ENCODE measurements at regions of chr19 and their contacts with region 1.

Region 1: DNA sequence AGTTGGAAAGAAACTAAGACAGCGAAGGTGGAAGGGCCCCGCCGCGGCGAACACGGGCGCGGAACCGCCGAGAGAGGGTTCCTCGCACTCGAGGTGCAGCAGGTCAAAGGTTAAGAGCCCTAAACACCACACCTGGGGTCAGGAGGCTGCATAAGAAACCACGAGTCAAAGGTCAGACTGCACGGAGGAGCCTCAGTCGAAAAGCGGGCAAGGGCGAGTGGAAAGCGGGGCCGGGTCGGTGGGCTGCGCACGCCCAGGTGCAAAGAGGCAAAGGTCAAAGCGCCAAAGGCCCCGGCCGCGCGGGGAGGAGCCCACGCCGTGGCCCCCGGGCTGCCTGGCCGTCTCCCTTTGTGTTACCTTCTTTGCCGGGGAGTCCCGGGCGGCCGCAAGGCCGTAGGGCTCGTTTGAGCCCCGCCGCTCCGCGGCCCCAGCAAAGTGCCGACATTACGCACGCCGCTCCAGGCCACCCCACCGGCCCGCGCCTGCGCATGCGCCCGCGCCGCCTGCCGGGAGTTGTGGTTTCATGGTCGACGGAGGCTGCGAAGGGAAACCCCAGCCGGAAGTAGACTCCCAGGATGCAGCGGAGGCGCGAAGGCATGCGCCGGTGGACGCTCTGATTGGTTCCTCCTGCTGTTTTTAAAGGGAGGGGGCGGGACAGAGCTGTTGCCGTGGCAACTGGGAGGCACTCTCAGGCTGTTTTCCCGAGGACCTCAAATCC is at the start of gene POLRMT:
- DNase-seq: peak; percentile 98
- ATAC-seq: peak; percentile 98
- H3K4me3 Mint-ChIP-seq: peak within 1 kb of the TSS; percentile 97
- H3K27ac Mint-ChIP-seq: peak within 1 kb of the TSS; percentile 91
- H3K4me1 Mint-ChIP-seq: peaks cover 29% of the 10 kb centered on the region
- H3K27me3 Mint-ChIP-seq: no peaks in the 10 kb centered on the region
- total RNA-seq, gene POLRMT: 69.0 to 77.4 TPM

Region 2: DNA sequence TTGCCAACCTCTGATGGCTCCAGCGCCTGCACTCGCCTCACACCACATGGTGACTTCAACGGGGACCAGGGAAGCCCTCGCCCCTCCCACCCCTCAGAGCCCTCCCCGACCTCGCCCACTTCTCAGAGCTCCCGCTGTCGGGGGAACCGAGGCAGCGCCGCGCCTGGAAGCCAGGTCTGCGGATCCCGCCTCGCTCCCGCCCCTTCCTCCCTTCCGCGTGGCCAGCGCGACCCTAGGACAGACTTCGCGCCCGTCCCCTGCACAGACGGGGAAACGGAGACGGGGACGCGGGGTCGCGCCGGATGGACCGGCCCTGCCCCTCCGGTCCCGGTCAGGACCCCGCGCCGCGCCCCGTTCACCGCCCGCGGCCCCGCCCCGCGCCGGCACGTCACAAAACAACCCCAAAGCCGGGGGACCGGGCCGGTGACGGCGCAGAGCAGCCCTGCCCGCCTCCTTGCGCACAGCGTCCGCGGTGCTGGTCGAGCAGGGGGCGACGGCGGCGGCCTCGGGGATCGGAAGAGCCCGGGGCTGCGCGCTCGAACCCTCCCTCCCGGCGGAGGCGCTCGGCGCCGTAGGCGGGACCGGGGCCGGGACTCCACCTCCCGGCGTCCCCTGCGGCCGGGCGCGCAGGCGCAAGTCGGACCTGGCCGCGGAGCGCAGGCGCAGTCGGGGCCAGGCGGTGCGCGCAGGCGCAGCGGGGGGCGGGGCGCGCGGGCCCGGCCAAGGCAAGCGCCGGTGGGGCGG is 102.0 kb before region 1 on chr19:
- CTCF ChIA-PET with region 1: no interaction called
- POLR2A ChIA-PET with region 1: no interaction called
- intact Hi-C with region 1: loop called in 1 of 2 experiments (anchors 1 kb)
- DNase-seq: peak; percentile 93
- ATAC-seq: peak; percentile 78
- H3K4me3 Mint-ChIP-seq: peak overlapping the region; percentile 77
- H3K27ac Mint-ChIP-seq: peak overlapping the region; percentile 84
- H3K4me1 Mint-ChIP-seq: peaks cover 24% of the 10 kb centered on the region
- H3K27me3 Mint-ChIP-seq: peaks cover 1% of the 10 kb centered on the region

Region 3: GRCh38 chr19:610801-611505 is 22.3 kb before region 1 on chr19:
- CTCF ChIA-PET with region 1: no interaction called
- POLR2A ChIA-PET with region 1: no interaction called
- intact Hi-C with region 1: loop called in 1 of 2 experiments (anchors 1 kb)
- DNase-seq: peak; percentile 75
- ATAC-seq: peak; percentile 45
- H3K4me3 Mint-ChIP-seq: peak overlapping the region; percentile 72
- H3K27ac Mint-ChIP-seq: peak overlapping the region; percentile 97
- H3K4me1 Mint-ChIP-seq: peaks cover 25% of the 10 kb centered on the region
- H3K27me3 Mint-ChIP-seq: peaks cover 2% of the 10 kb centered on the region